ENCODE measurements at regions of chr19 and their contacts with region 1.

Region 1: GRCh38 chr19:48152551-48152950 is 17.6 kb downstream of the LIG1 start:
- DNase-seq: peak; percentile 64
- H3K4me3 ChIP-seq: no peak overlapping the region
- H3K27ac ChIP-seq: no peak overlapping the region
- H3K4me1 ChIP-seq: peaks cover 0 to 7% (median 2%) of the 10 kb centered on the region in 4 donors
- H3K27me3 ChIP-seq: no peaks in the 10 kb centered on the region
- CTCF ChIP-seq: peak; percentile 81 to 94 (median 85)
- EP300 ChIP-seq: no peak
- POLR2A ChIP-seq: no peak

Region 2: GRCh38 chr19:47805313-47805712 is 347.2 kb before region 1 on chr19:
- in situ Hi-C with region 1: no loop called
- intact Hi-C with region 1: no loop called
- DNase-seq: no peak
- H3K4me3 ChIP-seq: no peak overlapping the region
- H3K27ac ChIP-seq: no peak overlapping the region
- H3K4me1 ChIP-seq: no peaks in the 10 kb centered on the region
- H3K27me3 ChIP-seq: no peaks in the 10 kb centered on the region
- CTCF ChIP-seq: no peak
- EP300 ChIP-seq: no peak
- POLR2A ChIP-seq: no peak

Region 3: GRCh38 chr19:48102870-48103751 is 49.4 kb before region 1 on chr19:
- in situ Hi-C with region 1: loop called in 3 of 4 experiments (anchors 5 to 10 kb)
- intact Hi-C with region 1: loop called (anchors 1 kb)
- DNase-seq: peak; percentile 27
- H3K4me3 ChIP-seq: no peak overlapping the region
- H3K27ac ChIP-seq: no peak overlapping the region
- H3K4me1 ChIP-seq: peaks cover 0 to 10% (median 4%) of the 10 kb centered on the region in 4 donors
- H3K27me3 ChIP-seq: no peaks in the 10 kb centered on the region
- CTCF ChIP-seq: peak; percentile 63 to 77 (median 74)
- EP300 ChIP-seq: no peak
- POLR2A ChIP-seq: no peak

Region 4: GRCh38 chr19:48110350-48110966 is 42.1 kb before region 1 on chr19 and contains the start of gene PLA2G4C:
- in situ Hi-C with region 1: loop called in 3 of 4 experiments (anchors 5 to 10 kb)
- intact Hi-C with region 1: loop called (anchors 1 kb)
- DNase-seq: peak; percentile 89
- H3K4me3 ChIP-seq: peak within 1 kb of the TSS; percentile 22 to 54 (median 34)
- H3K27ac ChIP-seq: peak within 1 kb of the TSS; percentile 87 to 93 (median 89)
- H3K4me1 ChIP-seq: peaks cover 0 to 26% (median 13%) of the 10 kb centered on the region in 4 donors
- H3K27me3 ChIP-seq: no peaks in the 10 kb centered on the region
- CTCF ChIP-seq: no peak
- EP300 ChIP-seq: no peak
- POLR2A ChIP-seq: peak; percentile 26
- total RNA-seq, gene PLA2G4C: 1.2 to 9.5 (median 8.3) TPM